Natural killer cell (primary cell): ENCODE measurements at regions of chr16 and their contacts with region 1.

Region 1: GRCh38 chr16:8892101-8892575 is 10.0 kb downstream of the LITAFD start:
- DNase-seq: peak in 1 of 2 donors; percentile 37
- ATAC-seq: no peak
- H3K4me3 ChIP-seq: no peak overlapping the region
- H3K4me3 Mint-ChIP-seq: no peak overlapping the region
- H3K27ac ChIP-seq: peak overlapping the region; percentile 32
- H3K27ac Mint-ChIP-seq: peak overlapping the region; percentile 54 to 64
- H3K4me1 ChIP-seq: peaks cover 10% of the 10 kb centered on the region
- H3K4me1 Mint-ChIP-seq: peaks cover 0 to 11% of the 10 kb centered on the region in 2 donors
- H3K27me3 ChIP-seq: no peaks in the 10 kb centered on the region
- H3K27me3 Mint-ChIP-seq: no peaks in the 10 kb centered on the region
- CTCF ChIP-seq: no peak

Region 2: DNA sequence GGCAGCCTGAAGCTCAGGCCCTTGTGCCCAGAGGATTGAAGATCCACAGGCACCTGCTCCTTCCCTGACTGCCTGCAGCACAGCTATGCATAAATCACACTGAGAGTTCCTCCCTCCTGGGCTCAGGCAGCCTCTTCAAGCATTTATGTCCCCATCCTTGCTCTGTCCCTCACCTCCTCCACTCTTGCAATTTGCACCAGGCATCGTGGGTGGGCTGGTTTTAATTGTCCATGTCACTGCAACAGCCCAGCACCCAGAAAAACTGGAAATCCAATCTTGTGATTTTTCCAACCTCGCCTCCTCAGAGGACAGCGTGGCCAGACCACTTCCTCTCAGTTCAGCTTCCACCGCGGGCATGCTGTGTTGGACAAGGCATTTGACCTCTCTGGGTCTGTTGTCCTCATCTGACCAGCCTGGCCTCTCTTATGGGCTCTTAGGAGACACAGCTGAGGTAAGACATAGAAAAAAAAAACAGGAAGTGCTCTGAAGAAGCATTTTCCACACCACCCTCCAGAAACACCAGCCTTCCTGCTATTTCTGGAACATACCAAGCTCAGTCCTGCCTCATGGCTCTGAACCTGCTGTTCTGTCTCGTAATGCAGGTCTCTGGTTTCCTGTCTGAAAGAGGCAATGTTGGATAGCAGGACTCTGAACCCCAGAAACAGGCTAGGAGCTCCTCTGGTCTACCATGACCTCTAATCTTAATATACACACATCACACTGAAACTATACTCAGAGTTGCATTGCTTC is 310.1 kb before region 1 on chr16:
- intact Hi-C with region 1: no loop called
- DNase-seq: no peak
- ATAC-seq: no peak
- H3K4me3 ChIP-seq: no peak overlapping the region
- H3K4me3 Mint-ChIP-seq: no peak overlapping the region
- H3K27ac ChIP-seq: no peak overlapping the region
- H3K27ac Mint-ChIP-seq: no peak overlapping the region
- H3K4me1 ChIP-seq: no peaks in the 10 kb centered on the region
- H3K4me1 Mint-ChIP-seq: peaks cover 0 to 5% of the 10 kb centered on the region in 2 donors
- H3K27me3 ChIP-seq: no peaks in the 10 kb centered on the region
- H3K27me3 Mint-ChIP-seq: peaks cover 4 to 21% of the 10 kb centered on the region in 2 donors
- CTCF ChIP-seq: no peak

Region 3: DNA sequence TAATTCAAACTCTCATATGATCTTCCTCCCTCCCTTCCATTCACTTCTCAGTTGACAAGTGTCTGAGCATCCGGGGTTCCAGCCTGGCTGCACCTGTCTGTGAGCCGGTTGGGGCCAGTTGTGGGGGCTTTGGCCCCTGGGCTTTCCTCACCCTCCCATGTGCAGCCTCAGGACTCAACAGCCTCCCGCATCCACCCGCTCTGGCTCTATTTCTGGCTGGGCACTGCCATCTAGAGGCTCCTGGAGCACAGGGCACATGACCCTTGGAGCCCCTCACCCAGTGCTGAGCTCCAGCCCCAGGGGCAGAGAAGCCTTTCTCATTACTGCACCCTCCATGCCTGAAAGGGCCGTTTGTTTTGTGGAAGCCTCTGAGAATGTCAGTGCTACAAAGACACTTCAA is 242.6 kb after region 1 on chr16:
- intact Hi-C with region 1: loop called (anchors 10 kb)
- DNase-seq: peak; percentile 53 to 76
- ATAC-seq: peak; percentile 67 to 78 (median 74)
- H3K4me3 ChIP-seq: no peak overlapping the region
- H3K4me3 Mint-ChIP-seq: peak overlapping the region; percentile 65
- H3K27ac ChIP-seq: no peak overlapping the region
- H3K27ac Mint-ChIP-seq: peak overlapping the region in 1 of 2 donors; percentile 58
- H3K4me1 ChIP-seq: peaks cover 43% of the 10 kb centered on the region
- H3K4me1 Mint-ChIP-seq: peaks cover 30 to 51% of the 10 kb centered on the region in 2 donors
- H3K27me3 ChIP-seq: no peaks in the 10 kb centered on the region
- H3K27me3 Mint-ChIP-seq: peaks cover 0 to 2% of the 10 kb centered on the region in 2 donors
- CTCF ChIP-seq: peak; percentile 58